ENCODE measurements at regions of chr11 and their contacts with region 1.

Region 1: GRCh38 chr11:72953637-72954036 is 139.4 kb downstream of the ATG16L2 start:
- DNase-seq: no peak
- H3K4me3 ChIP-seq: no peak overlapping the region
- H3K27ac ChIP-seq: no peak overlapping the region
- H3K4me1 ChIP-seq: no peaks in the 10 kb centered on the region
- H3K27me3 ChIP-seq: no peaks in the 10 kb centered on the region
- CTCF ChIP-seq: no peak

Region 2: GRCh38 chr11:72787216-72788104 is 166.2 kb before region 1 on chr11:
- CTCF ChIA-PET with region 1: no interaction called
- POLR2A ChIA-PET with region 1: no interaction called
- intact Hi-C with region 1: no loop called
- DNase-seq: no peak
- H3K4me3 ChIP-seq: no peak overlapping the region
- H3K27ac ChIP-seq: peak overlapping the region; percentile 80
- H3K4me1 ChIP-seq: peaks cover 74% of the 10 kb centered on the region
- H3K27me3 ChIP-seq: no peaks in the 10 kb centered on the region
- CTCF ChIP-seq: no peak

Region 3: GRCh38 chr11:72969894-72970335 is 16.3 kb after region 1 on chr11:
- CTCF ChIA-PET with region 1: no interaction called
- POLR2A ChIA-PET with region 1: no interaction called
- intact Hi-C with region 1: no loop called
- DNase-seq: no peak
- H3K4me3 ChIP-seq: no peak overlapping the region
- H3K27ac ChIP-seq: peak overlapping the region; percentile 70
- H3K4me1 ChIP-seq: peaks cover 10% of the 10 kb centered on the region
- H3K27me3 ChIP-seq: no peaks in the 10 kb centered on the region
- CTCF ChIP-seq: no peak

Region 4: DNA sequence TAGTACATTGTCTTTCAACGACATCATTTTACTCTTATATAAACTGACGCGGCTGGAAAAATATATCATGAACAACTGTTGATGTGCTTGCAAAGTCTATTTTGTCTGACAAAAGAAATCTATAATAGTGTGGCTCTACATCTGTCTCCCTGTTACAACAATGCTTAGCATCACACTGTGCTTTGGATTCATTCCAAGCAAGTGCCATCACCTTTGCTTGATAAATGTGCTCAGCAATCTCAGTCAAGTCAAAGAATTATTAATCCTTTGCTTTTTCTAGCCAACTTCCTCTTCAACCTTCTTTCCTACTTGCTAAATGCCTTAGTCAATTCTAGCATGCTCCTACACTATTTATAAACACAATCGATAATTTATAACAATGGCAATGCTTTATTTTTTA is 48.0 kb after region 1 on chr11:
- CTCF ChIA-PET with region 1: no interaction called
- POLR2A ChIA-PET with region 1: no interaction called
- intact Hi-C with region 1: no loop called
- DNase-seq: no peak
- H3K4me3 ChIP-seq: no peak overlapping the region
- H3K27ac ChIP-seq: no peak overlapping the region
- H3K4me1 ChIP-seq: peaks cover 18% of the 10 kb centered on the region
- H3K27me3 ChIP-seq: no peaks in the 10 kb centered on the region
- CTCF ChIP-seq: no peak

Region 5: DNA sequence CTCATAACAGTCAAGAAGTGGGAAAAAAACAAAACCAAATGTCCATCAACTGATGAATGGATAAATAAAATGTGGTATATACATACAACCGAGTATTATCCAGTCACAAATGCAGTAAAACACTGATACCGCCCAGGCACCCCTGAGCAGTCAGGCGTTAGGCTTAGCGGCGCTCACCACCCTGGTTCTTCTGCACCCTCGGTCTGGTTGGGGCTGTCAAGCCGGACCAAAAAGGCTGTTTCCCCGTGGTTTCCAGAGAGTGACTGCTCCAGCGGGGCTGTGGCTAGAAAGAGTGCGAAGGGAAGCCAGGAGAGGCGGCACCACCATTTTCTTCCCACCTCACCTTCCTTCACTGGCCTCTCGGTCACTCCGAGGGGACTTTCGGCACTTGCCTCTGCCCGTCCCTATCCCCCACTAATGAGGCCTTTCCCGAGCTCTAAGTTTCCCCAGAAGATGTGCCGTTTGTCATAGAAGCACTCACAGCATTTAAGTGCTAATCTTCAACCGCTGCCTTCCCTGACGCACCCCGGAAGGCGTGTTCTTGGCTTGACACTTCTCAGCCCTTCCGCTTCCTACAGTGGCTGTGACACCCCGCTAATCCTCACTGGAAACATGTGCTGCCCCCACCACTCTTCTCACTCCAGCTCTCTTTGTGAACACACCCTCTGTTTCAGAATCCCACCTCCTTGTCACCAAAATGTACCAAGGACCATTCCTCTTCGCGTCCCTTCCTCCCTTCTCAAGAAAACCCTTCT is 146.1 kb after region 1 on chr11:
- CTCF ChIA-PET with region 1: no interaction called
- POLR2A ChIA-PET with region 1: interaction called, 12 read pairs
- intact Hi-C with region 1: no loop called
- DNase-seq: no peak
- H3K4me3 ChIP-seq: no peak overlapping the region
- H3K27ac ChIP-seq: no peak overlapping the region
- H3K4me1 ChIP-seq: no peaks in the 10 kb centered on the region
- H3K27me3 ChIP-seq: no peaks in the 10 kb centered on the region
- CTCF ChIP-seq: no peak

Measured in PC-9 (cell line).